GM13977 (cell line): ENCODE measurements at regions of chr1 and their contacts with region 1.

Region 1: GRCh38 chr1:174074757-174075156 is 52.6 kb upstream of the RC3H1 start:
- DNase-seq: peak; percentile 28
- CTCF ChIP-seq: peak; percentile 48

Region 2: GRCh38 chr1:173970252-173970651 is 104.5 kb before region 1 on chr1:
- in situ Hi-C with region 1: no loop called
- DNase-seq: no peak
- CTCF ChIP-seq: peak; percentile 3

Region 3: GRCh38 chr1:174743654-174744561 is 669.2 kb after region 1 on chr1:
- in situ Hi-C with region 1: loop called (anchors 25 kb)
- DNase-seq: peak; percentile 27
- CTCF ChIP-seq: peak; percentile 48